Activated CD8-positive, alpha-beta memory T cell treated with anti-CD3 and anti-CD28 coated beads, Interleukin-2, amount 10 ng/mL, durations not matched to agents 7 days and 5 days (primary cell): ENCODE measurements at regions of chr2 and their contacts with region 1.

Region 1: DNA sequence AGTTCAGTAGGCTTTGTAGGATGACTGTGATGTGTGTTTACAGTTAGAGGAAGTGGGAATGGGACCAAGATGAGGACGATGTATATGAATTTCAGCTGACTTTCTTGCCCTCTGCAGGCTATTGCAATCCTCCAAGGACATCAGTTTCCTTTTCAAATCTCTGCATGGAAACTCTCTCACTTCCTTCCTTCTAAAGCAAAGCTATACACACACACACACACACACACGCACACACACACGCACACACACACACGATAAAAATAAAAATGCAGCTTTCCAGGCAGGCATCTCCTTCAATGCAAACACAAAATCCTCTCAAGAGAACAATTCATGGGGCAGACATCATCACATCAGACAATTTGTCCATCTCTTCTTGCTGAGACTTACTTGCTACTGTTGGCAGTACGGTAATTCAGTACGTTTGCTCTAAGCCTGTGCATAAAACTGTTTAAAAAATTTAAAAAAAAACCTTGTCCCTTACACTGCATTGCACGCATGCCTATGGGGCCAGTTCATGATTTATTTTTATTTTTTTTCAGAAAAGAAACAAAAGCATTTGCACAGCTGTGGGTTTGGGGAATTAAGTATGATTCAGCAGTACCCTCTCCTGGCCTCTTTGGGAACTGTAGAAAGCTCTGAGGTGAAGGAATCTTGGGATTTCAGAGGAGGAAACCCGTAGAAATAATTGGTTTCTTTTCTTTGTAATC is 27.1 kb upstream of the ICOS start:
- DNase-seq: no peak
- ATAC-seq: peak; percentile 74
- H3K4me3 Mint-ChIP-seq: peak overlapping the region; percentile 0
- H3K27ac Mint-ChIP-seq: peak overlapping the region; percentile 12
- H3K4me1 Mint-ChIP-seq: peaks cover 25% of the 10 kb centered on the region
- H3K27me3 Mint-ChIP-seq: no peaks in the 10 kb centered on the region

Region 2: GRCh38 chr2:203484266-203485112 is 424.9 kb before region 1 on chr2:
- CTCF ChIA-PET with region 1: interaction called, 15 read pairs
- DNase-seq: peak; percentile 69
- ATAC-seq: peak; percentile 82
- H3K4me3 Mint-ChIP-seq: no peak overlapping the region
- H3K27ac Mint-ChIP-seq: no peak overlapping the region
- H3K4me1 Mint-ChIP-seq: peaks cover 9% of the 10 kb centered on the region
- H3K27me3 Mint-ChIP-seq: peaks cover 2% of the 10 kb centered on the region

Region 3: GRCh38 chr2:203599509-203599908 is 309.9 kb before region 1 on chr2:
- CTCF ChIA-PET with region 1: no interaction called
- DNase-seq: no peak
- ATAC-seq: peak; percentile 69
- H3K4me3 Mint-ChIP-seq: no peak overlapping the region
- H3K27ac Mint-ChIP-seq: no peak overlapping the region
- H3K4me1 Mint-ChIP-seq: peaks cover 27% of the 10 kb centered on the region
- H3K27me3 Mint-ChIP-seq: peaks cover 75% of the 10 kb centered on the region

Region 4: DNA sequence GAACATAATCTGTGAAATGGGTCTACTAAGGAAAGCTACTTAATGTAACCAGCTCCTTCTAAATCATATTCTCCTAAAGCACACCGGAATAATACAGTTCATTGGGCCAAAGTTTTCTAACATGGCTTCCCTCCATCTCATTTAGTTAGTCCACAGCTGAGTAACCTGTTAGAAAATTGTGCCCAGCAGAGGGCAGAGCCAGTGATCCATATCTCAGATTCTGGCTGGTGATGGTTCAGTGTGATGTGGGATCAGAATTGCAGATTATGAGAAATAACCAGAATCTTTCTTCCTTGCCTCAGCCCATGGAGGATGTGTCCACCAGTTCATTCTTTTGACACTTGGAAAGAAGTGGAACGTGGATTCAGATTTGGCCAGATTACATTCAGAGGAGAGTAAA is 51.2 kb before region 1 on chr2:
- CTCF ChIA-PET with region 1: interaction called, 13 read pairs
- DNase-seq: peak; percentile 57
- ATAC-seq: peak; percentile 72
- H3K4me3 Mint-ChIP-seq: no peak overlapping the region
- H3K27ac Mint-ChIP-seq: no peak overlapping the region
- H3K4me1 Mint-ChIP-seq: peaks cover 54% of the 10 kb centered on the region
- H3K27me3 Mint-ChIP-seq: no peaks in the 10 kb centered on the region